ENCODE measurements at regions of chr13 and their contacts with region 1.

Region 1: DNA sequence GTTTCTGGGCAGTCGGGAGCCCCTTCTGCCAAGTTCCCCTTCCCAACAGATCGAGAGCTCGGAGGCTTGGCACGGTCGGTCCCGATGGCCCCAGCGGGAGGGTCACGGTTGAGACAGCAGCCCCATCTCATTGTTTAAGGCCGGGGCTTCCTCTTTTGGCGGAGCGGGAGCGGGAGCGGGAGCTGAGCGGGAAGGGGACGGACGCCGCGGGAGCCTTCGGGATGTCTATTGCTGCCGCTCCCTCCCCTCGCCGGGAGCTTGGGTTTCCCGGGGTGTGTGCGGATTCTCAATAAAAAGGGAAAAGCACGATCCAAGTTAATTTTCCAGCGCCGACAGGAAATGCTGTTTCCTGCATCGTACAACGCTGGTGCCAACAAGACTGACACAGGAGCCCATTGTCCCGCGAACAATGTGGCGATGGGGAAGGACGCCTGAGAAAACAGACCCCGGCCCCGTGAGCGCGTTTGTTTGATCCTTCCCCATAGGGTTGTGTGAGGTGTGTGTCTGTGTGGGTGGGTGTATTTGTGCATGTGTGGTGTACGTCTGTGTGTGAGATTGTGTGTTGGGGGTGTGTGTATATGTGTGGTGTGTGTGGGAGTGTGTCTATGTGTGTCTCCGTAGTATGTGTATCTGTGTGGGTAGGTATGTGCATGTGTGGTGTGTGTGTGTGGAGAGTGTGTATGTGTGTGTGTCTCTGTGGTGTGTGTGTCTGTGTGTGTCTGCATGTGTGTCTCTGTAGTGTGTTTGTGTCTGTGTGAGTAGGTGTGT is 36.3 kb upstream of the FLT1 start:
- DNase-seq: peak; percentile 72 to 80
- ATAC-seq: peak; percentile 56 to 83 (median 72)
- H3K4me3 ChIP-seq: peak overlapping the region in 9 of 10 donors; percentile 43 to 65 (median 54)
- H3K27ac ChIP-seq: peak overlapping the region; percentile 53 to 91 (median 86)
- H3K4me1 ChIP-seq: peaks cover 0 to 43% (median 15%) of the 10 kb centered on the region in 9 donors
- H3K27me3 ChIP-seq: peaks cover 0 to 67% (median 20%) of the 10 kb centered on the region in 7 donors
- CTCF ChIP-seq: no peak

Region 2: GRCh38 chr13:28408235-28408848 is 122.9 kb before region 1 on chr13:
- intact Hi-C with region 1: loop called in 1 of 10 experiments (anchors 5 kb)
- DNase-seq: peak; percentile 57 to 88
- ATAC-seq: peak; percentile 86 to 97 (median 90)
- H3K4me3 ChIP-seq: peak overlapping the region in 1 of 10 donors; percentile 3
- H3K27ac ChIP-seq: peak overlapping the region; percentile 15 to 86 (median 62)
- H3K4me1 ChIP-seq: peaks cover 0 to 76% (median 45%) of the 10 kb centered on the region in 9 donors
- H3K27me3 ChIP-seq: peaks cover 0 to 6% (median 0%) of the 10 kb centered on the region in 7 donors
- CTCF ChIP-seq: peak in 3 of 9 donors; percentile 21 to 34 (median 23)

Region 3: DNA sequence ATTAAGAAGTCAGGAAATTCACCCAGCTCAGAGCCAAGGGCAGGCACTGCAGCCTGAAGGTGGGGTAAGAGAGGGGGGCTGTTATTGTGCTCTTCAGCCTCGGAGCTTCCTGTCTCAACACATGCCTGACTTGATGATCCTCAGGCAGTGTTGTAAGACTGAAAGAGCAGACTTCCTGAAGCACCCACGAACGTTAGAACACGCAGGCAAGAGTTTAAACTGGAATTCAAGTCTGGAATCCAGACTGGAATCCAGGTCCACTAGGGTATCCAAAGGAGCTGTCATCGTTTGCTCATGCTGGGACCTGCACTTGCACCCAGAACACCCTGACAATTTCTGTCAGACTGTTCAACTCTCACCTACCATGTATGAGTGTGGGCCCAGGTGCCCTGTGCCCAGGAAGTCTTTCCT is 25.6 kb before region 1 on chr13:
- intact Hi-C with region 1: loop called in 1 of 10 experiments (anchors 1 kb)
- DNase-seq: no peak
- ATAC-seq: peak; percentile 45 to 83 (median 80)
- H3K4me3 ChIP-seq: no peak overlapping the region
- H3K27ac ChIP-seq: peak overlapping the region in 4 of 10 donors; percentile 30 to 49 (median 42)
- H3K4me1 ChIP-seq: peaks cover 0 to 43% (median 11%) of the 10 kb centered on the region in 9 donors
- H3K27me3 ChIP-seq: no peaks in the 10 kb centered on the region
- CTCF ChIP-seq: peak in 1 of 9 donors; percentile 21

Region 4: DNA sequence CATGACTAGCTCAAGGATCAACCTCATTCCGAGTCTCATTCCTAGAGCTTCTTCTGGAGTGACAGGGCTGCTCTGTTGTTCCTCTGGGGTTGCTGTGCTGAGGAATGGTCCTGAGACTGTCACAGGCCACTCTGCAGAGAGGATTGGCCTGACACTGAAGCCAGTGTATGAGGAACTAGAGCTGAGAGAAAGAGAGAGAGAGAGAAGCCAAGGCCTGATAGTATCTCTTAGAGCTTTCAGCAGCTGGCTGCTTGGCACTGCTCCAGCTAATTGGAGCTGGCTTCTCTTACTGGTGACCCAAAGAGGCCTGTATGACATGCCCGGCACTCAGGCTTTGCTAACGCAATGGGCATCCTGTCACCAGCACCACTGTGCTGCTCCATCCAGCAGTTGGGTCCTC is 37.0 kb after region 1 on chr13:
- intact Hi-C with region 1: no loop called
- DNase-seq: peak; percentile 71 to 77
- ATAC-seq: peak; percentile 52 to 90 (median 80)
- H3K4me3 ChIP-seq: no peak overlapping the region
- H3K27ac ChIP-seq: no peak overlapping the region
- H3K4me1 ChIP-seq: peaks cover 0 to 14% (median 4%) of the 10 kb centered on the region in 9 donors
- H3K27me3 ChIP-seq: no peaks in the 10 kb centered on the region
- CTCF ChIP-seq: no peak

Region 5: DNA sequence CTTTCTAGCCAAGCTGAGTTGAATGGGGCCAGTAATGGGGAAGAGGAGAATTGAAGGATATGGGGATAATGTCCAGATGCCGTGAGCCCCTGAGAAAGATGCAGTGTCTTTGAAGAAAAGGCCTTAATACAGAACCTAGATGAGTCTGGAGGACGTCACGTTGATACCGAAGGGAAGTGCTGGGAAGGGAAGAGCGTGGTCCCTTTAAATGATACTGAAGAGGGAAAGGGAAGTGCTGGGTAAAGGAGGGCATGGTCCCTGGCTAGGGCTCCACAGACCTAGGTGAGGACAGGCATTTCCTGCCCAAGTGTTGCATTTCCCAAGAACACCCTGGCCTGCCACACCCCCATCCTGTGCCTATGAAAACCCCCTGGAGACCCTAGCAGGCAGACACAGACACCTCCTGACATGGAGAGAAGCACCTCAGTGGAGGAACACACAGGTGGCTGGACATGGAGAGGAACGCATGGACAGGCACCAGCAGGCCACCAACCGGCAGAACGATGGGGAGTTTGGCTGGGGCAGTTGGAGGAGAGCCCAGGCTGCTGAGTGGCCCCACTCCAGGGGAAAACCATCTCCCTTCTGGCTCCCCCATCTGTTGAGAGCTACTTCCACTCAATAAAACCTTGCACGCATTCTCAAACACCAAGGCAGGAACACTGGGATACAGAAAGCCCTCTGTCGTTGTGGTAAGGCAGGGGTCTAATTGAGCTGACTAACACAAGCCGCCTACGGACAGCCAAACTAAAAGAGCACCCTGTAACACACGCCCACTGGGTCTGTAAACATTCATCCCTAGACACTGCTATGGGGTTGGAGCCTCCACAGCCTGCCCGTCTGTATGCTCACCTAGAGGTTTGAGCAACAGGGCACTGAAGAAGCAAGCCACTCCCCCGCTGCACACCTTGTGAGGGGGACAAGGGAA is 92.8 kb after region 1 on chr13:
- intact Hi-C with region 1: loop called in 3 of 10 experiments (anchors 10 kb)
- DNase-seq: no peak
- ATAC-seq: peak in 2 of 8 donors; percentile 32 to 36
- H3K4me3 ChIP-seq: no peak overlapping the region
- H3K27ac ChIP-seq: no peak overlapping the region
- H3K4me1 ChIP-seq: peaks cover 0 to 43% (median 11%) of the 10 kb centered on the region in 9 donors
- H3K27me3 ChIP-seq: no peaks in the 10 kb centered on the region
- CTCF ChIP-seq: no peak

Region 6: DNA sequence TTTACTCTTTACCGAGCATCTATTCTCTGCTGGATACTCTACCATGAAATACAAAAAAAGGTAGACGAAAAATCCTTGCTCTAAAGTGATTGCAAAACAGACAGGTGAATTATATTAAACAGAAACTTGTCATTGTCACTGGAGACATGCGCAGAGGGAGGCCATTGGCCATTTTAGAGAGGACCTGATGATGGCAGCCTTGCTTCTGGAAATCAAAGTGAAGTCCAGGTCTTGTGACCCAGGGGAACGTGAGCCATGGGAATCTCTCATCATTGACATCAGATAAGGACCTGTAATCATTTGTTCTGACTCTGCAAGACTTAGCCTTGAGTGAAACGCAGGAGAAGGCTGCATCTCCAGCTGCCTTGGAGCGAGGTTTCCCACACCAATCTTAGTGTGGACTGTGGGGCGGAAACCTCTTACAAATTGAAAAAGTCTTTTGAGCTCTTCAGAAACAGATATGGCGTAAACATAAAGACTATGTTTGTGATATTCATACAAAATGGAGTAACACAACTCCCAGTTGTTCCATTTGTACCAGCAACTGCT is 204.3 kb after region 1 on chr13:
- intact Hi-C with region 1: no loop called
- DNase-seq: no peak
- ATAC-seq: no peak
- H3K4me3 ChIP-seq: no peak overlapping the region
- H3K27ac ChIP-seq: no peak overlapping the region
- H3K4me1 ChIP-seq: no peaks in the 10 kb centered on the region
- H3K27me3 ChIP-seq: peaks cover 0 to 5% (median 0%) of the 10 kb centered on the region in 7 donors
- CTCF ChIP-seq: no peak

Region 7: GRCh38 chr13:30119476-30119875 is 1588.2 kb after region 1 on chr13:
- intact Hi-C with region 1: no loop called
- DNase-seq: no peak
- ATAC-seq: no peak
- H3K4me3 ChIP-seq: no peak overlapping the region
- H3K27ac ChIP-seq: no peak overlapping the region
- H3K4me1 ChIP-seq: peaks cover 0 to 10% (median 9%) of the 10 kb centered on the region in 9 donors
- H3K27me3 ChIP-seq: peaks cover 0 to 48% (median 12%) of the 10 kb centered on the region in 7 donors
- CTCF ChIP-seq: no peak